Posterior vena cava (tissue), 2 donors: ENCODE measurements at regions of chr5 and their contacts with region 1.

Region 1: DNA sequence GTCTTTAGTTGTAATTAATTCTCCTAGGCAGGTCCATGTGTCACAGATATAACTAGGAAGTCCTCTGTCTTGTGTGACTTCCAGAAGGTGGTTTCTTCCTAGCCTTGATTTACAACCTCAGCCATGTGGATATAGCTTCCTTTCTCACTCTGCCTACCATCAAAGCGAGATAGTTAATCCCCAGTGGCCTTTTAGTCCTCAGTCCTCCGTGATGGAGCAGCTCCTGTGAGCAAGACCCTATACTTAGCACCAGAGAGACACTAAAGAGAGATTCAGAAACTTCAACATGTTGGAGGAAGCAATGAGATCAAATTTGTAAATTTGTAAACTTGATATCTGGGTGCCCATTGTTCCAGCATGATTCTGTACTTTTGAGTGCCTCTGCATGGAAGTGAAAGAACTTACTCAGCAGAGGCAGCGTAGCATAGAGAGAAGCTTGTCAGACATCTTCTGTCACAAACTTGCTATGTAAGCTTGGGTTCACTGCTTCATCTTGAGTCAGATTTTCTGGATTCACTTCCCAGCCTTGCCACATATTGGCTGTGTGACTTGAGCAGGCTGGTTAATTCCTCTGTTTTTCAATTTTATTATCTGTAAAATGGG is 170.2 kb upstream of the NR3C1 start:
- DNase-seq: no peak

Region 2: GRCh38 chr5:143290125-143290524 is 283.5 kb before region 1 on chr5:
- intact Hi-C with region 1: no loop called
- DNase-seq: no peak

Region 3: DNA sequence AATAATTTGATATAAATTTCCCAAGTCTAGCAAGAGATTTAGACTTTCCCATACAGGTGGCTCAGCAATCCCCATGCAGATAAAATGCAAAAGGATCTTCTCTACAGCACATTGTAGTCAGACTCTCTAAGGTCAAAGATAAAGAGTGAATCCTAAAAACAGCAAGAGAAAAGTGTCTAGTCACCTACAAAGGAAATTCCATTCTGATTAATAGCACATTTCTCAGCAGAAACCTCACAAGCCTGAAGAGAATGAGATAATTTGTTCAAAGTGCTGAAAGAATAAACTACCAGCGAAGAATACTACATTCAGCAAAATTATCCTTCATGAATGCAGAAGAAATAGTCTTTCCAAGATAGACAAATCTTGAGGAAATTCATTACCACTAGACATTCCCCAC is 1768.2 kb after region 1 on chr5:
- intact Hi-C with region 1: loop called in 1 of 2 experiments (anchors 5 kb)
- DNase-seq: no peak